ENCODE measurements at regions of chr18 and their contacts with region 1.

Region 1: DNA sequence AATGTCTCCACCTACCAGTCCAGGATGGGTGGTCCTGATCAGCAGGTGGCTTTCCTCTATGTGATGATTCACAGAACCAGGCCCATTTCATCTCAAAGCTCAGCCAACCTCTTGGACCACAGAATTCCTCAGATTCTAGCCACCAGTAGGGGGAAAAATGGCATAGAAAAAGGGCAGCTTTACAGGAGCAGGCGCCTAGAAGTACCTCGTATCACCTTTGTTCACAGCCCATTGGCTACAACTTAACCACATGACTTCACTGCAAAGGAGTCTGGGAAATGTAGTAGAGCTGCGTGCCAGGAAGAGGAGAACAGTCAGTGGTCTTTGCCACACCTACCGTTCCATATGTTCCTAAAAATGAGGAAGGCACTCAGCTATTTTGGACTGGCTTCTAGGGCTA is 62.8 kb upstream of the DTNA start:
- DNase-seq: no peak
- ATAC-seq: peak in 3 of 4 donors; percentile 25 to 35 (median 28)
- H3K4me3 ChIP-seq: no peak overlapping the region
- H3K27ac ChIP-seq: peak overlapping the region; percentile 82
- H3K4me1 ChIP-seq: peaks cover 42% of the 10 kb centered on the region
- H3K27me3 ChIP-seq: no peaks in the 10 kb centered on the region
- CTCF ChIP-seq: no peak

Region 2: DNA sequence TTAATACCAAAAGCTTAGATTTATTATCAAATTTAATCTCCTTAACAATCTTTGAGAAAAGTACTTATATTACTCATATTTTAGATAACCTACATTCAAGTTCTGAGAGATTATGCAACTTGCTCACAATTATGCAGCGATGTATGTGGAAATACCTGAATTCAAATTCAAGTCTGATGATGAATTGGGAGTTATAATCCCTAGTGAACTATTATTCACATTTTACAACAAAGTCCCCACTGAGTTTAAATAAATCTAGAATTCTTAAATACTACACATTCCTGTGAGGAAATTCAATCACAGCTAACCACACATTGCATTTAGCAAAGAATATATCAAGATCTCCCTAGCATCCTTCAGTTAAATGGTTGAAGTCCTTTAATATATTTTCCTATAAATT is 700.9 kb before region 1 on chr18:
- intact Hi-C with region 1: no loop called
- DNase-seq: no peak
- ATAC-seq: no peak
- H3K4me3 ChIP-seq: no peak overlapping the region
- H3K27ac ChIP-seq: no peak overlapping the region
- H3K4me1 ChIP-seq: no peaks in the 10 kb centered on the region
- H3K27me3 ChIP-seq: no peaks in the 10 kb centered on the region
- CTCF ChIP-seq: no peak

Region 3: GRCh38 chr18:34493099-34493544 is 154.1 kb before region 1 on chr18:
- intact Hi-C with region 1: loop called in 1 of 2 experiments (anchors 10 kb)
- DNase-seq: peak; percentile 75 to 90
- ATAC-seq: peak; percentile 91 to 93 (median 92)
- H3K4me3 ChIP-seq: peak overlapping the region; percentile 85
- H3K27ac ChIP-seq: peak overlapping the region; percentile 92
- H3K4me1 ChIP-seq: peaks cover 22% of the 10 kb centered on the region
- H3K27me3 ChIP-seq: no peaks in the 10 kb centered on the region
- CTCF ChIP-seq: no peak

Region 4: DNA sequence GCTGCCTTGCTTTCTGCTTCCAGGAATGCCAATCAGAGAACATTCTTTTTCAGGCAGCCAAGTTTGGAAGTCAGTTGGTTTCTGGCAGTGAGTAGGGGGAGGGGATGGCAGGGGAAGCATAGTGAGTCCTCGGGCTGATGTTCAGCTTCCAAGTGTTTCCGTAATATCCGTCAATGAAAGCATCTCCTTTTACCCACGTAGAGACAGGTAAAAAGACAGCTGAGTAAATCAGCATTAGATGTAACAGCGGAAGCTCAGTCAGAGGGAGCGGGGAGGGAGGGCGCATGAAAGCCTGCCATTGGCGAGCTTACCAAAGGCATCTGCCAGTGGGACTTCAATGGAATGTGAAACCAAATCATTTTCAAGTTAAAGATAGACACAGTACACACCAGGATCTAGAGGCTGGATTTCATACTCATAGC is 54.3 kb before region 1 on chr18:
- intact Hi-C with region 1: loop called in 1 of 2 experiments (anchors 5 kb)
- DNase-seq: peak; percentile 72 to 85
- ATAC-seq: peak; percentile 85 to 95 (median 88)
- H3K4me3 ChIP-seq: peak overlapping the region; percentile 59
- H3K27ac ChIP-seq: peak overlapping the region; percentile 83
- H3K4me1 ChIP-seq: peaks cover 25% of the 10 kb centered on the region
- H3K27me3 ChIP-seq: no peaks in the 10 kb centered on the region
- CTCF ChIP-seq: no peak

Region 5: GRCh38 chr18:34600118-34600517 is 47.1 kb before region 1 on chr18:
- intact Hi-C with region 1: loop called (anchors 5 kb)
- DNase-seq: no peak
- ATAC-seq: no peak
- H3K4me3 ChIP-seq: no peak overlapping the region
- H3K27ac ChIP-seq: peak overlapping the region; percentile 51
- H3K4me1 ChIP-seq: peaks cover 43% of the 10 kb centered on the region
- H3K27me3 ChIP-seq: no peaks in the 10 kb centered on the region
- CTCF ChIP-seq: no peak